ENCODE measurements at regions of chr17 and their contacts with region 1.

Region 1: DNA sequence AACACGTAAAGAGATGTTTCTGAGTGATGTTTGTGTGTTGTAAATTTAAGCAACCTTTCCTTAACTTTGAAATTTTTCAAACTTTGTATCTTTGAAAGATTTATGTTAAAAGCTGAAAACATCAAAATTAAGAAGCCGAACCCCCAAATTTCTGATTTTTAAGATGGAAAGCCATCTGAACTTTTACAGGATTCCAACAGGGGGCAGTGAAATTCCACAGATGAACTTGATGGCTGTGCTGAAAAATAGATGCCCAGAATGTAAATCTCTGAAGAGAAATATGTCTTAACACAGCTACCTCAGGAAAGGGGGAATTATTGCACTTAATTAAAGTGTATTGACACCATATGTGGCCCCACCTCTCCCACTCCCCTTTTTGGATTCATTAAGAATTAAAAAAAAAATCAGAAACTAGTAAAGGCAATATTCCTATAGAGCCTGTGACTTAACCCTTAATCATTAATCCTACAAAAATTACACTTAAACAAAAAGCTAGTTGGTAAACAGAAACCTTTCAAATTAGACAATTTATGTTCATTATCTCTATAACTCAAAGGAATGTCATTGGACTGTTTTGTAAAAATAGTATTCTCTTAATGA is 597.9 kb downstream of the KCNJ2 start:
- DNase-seq: peak; percentile 42
- ATAC-seq: peak; percentile 42; the same call in 1 of the 2 replicates
- H3K4me3 ChIP-seq: no peak overlapping the region
- H3K27ac ChIP-seq: no peak overlapping the region
- H3K4me1 ChIP-seq: no peaks in the 10 kb centered on the region
- H3K27me3 ChIP-seq: no peaks in the 10 kb centered on the region
- CTCF ChIP-seq: peak; percentile 72 to 95 (median 76); a peak in 5 of 6 replicates
- POLR2A ChIP-seq: no peak
- RAD21 ChIP-seq: peak; percentile 91

Region 2: GRCh38 chr17:70636517-70637133 is 130.6 kb before region 1 on chr17:
- CTCF ChIA-PET with region 1: no interaction called
- POLR2A ChIA-PET with region 1: no interaction called
- RAD21 ChIA-PET with region 1: no interaction called
- intact Hi-C with region 1: loop called (anchors 10 kb)
- DNase-seq: peak; percentile 54
- ATAC-seq: peak; percentile 63
- H3K4me3 ChIP-seq: no peak overlapping the region
- H3K27ac ChIP-seq: no peak overlapping the region
- H3K4me1 ChIP-seq: no peaks in the 10 kb centered on the region
- H3K27me3 ChIP-seq: no peaks in the 10 kb centered on the region
- CTCF ChIP-seq: peak; percentile 61 to 86 (median 70); a peak in 5 of 6 replicates
- POLR2A ChIP-seq: no peak
- RAD21 ChIP-seq: peak; percentile 91

Region 3: GRCh38 chr17:71055128-71055527 is 287.9 kb after region 1 on chr17:
- CTCF ChIA-PET with region 1: interaction called, 10 read pairs
- POLR2A ChIA-PET with region 1: no interaction called
- RAD21 ChIA-PET with region 1: no interaction called
- intact Hi-C with region 1: no loop called
- DNase-seq: no peak
- ATAC-seq: no peak
- H3K4me3 ChIP-seq: no peak overlapping the region
- H3K27ac ChIP-seq: no peak overlapping the region
- H3K4me1 ChIP-seq: no peaks in the 10 kb centered on the region
- H3K27me3 ChIP-seq: no peaks in the 10 kb centered on the region
- CTCF ChIP-seq: no peak
- POLR2A ChIP-seq: no peak
- RAD21 ChIP-seq: no peak

Region 4: DNA sequence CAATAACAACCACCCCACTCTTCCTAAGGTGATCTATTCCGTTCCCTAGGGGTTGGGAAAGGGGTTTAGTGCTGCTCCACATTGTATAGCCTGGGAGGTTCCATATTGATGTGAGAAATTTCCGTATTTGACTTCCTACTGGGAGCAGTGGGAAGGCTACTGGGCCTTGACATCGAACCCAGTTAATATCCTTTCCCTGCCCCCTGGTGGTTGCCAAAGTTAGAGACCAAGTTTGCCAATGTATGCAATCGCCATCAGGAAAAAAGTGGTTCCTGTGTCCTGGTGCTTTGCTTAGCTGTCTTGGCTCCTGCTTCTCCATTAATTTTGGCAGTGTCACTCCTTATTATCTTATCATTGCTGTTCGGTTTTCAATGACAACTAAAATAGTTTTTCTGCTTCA is 317.0 kb after region 1 on chr17:
- CTCF ChIA-PET with region 1: interaction called, 112 read pairs
- POLR2A ChIA-PET with region 1: no interaction called
- RAD21 ChIA-PET with region 1: interaction called, 9 to 12 read pairs
- intact Hi-C with region 1: loop called (anchors 1 kb)
- DNase-seq: peak; percentile 69
- ATAC-seq: peak; percentile 87
- H3K4me3 ChIP-seq: no peak overlapping the region
- H3K27ac ChIP-seq: no peak overlapping the region
- H3K4me1 ChIP-seq: peaks cover 0 to 6% of the 10 kb centered on the region in 2 experiments; a peak in 1 of 4 replicates
- H3K27me3 ChIP-seq: no peaks in the 10 kb centered on the region
- CTCF ChIP-seq: peak; percentile 69 to 78 (median 73); a peak in 5 of 6 replicates
- POLR2A ChIP-seq: no peak
- RAD21 ChIP-seq: peak; percentile 85

Region 5: DNA sequence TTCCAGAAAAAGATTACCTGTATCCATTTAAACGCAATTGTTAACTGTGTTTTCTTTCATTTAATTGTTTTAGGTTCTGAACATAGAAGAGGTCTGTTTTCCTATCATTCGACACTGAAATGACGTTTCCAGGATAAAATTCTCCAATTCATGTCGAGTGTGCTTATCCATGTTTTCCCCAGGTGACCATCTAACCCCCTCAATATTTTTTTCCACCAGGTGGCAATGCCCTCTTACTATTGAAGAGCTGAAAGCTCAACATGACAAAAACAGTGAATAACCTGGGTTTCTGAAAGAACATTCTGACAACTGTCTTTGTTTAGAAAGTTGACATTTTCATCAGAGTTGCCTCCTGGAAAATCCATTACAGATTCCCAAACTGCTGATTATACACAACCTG is 350.8 kb after region 1 on chr17:
- CTCF ChIA-PET with region 1: interaction called, 14 read pairs
- POLR2A ChIA-PET with region 1: no interaction called
- RAD21 ChIA-PET with region 1: no interaction called
- intact Hi-C with region 1: no loop called
- DNase-seq: peak; percentile 29
- ATAC-seq: peak; percentile 46; the same call in 1 of the 2 replicates
- H3K4me3 ChIP-seq: no peak overlapping the region
- H3K27ac ChIP-seq: no peak overlapping the region
- H3K4me1 ChIP-seq: no peaks in the 10 kb centered on the region
- H3K27me3 ChIP-seq: no peaks in the 10 kb centered on the region
- CTCF ChIP-seq: peak; percentile 55 to 77 (median 66); a peak in 5 of 6 replicates
- POLR2A ChIP-seq: no peak
- RAD21 ChIP-seq: peak; percentile 86

Region 6: GRCh38 chr17:71460943-71461342 is 693.7 kb after region 1 on chr17:
- CTCF ChIA-PET with region 1: interaction called, 36 read pairs
- POLR2A ChIA-PET with region 1: no interaction called
- RAD21 ChIA-PET with region 1: no interaction called
- intact Hi-C with region 1: loop called (anchors 2 kb)
- DNase-seq: peak; percentile 28
- ATAC-seq: peak; percentile 68; the same call in 1 of the 2 replicates
- H3K4me3 ChIP-seq: no peak overlapping the region
- H3K27ac ChIP-seq: no peak overlapping the region
- H3K4me1 ChIP-seq: no peaks in the 10 kb centered on the region
- H3K27me3 ChIP-seq: no peaks in the 10 kb centered on the region
- CTCF ChIP-seq: peak; percentile 53 to 75 (median 66)
- POLR2A ChIP-seq: no peak
- RAD21 ChIP-seq: peak; percentile 74

Region 7: GRCh38 chr17:72120642-72121163 is 1353.5 kb after region 1 on chr17 and contains the start of gene SOX9:
- CTCF ChIA-PET with region 1: interaction called, 11 read pairs
- POLR2A ChIA-PET with region 1: interaction called, 3 read pairs
- RAD21 ChIA-PET with region 1: interaction called in 1 of 2 experiments, 3 read pairs
- intact Hi-C with region 1: loop called (anchors 1 kb)
- DNase-seq: peak; percentile 95
- ATAC-seq: peak; percentile 94
- H3K4me3 ChIP-seq: peak within 1 kb of the TSS; percentile 93 to 99
- H3K27ac ChIP-seq: peak within 1 kb of the TSS; percentile 72
- H3K4me1 ChIP-seq: peaks cover 23 to 49% of the 10 kb centered on the region in 2 experiments
- H3K27me3 ChIP-seq: no peaks in the 10 kb centered on the region
- CTCF ChIP-seq: no peak
- POLR2A ChIP-seq: peak; percentile 97
- RAD21 ChIP-seq: peak; percentile 26; the same call in 1 of the 2 replicates
- total RNA-seq, gene SOX9: 69.2 TPM

Measured in HCT116 (cell line).